Mucosa of descending colon (tissue), 3 donors: ENCODE measurements at regions of chr11 and their contacts with region 1.

Region 1: GRCh38 chr11:7986768-7987559 is at the start of gene EIF3F:
- DNase-seq: peak; percentile 86 to 99 (median 88)
- ATAC-seq: peak; percentile 99
- H3K4me3 ChIP-seq: peak within 1 kb of the TSS; percentile 94
- H3K4me1 ChIP-seq: peaks cover 27% of the 10 kb centered on the region
- CTCF ChIP-seq: peak; percentile 77
- total RNA-seq, gene EIF3F: 207 to 228 (median 218) TPM

Region 2: GRCh38 chr11:7892840-7893254 is 94.1 kb before region 1 on chr11:
- intact Hi-C with region 1: loop called (anchors 5 to 10 kb)
- DNase-seq: peak in 1 of 3 donors; percentile 21
- ATAC-seq: peak; percentile 83
- H3K4me3 ChIP-seq: no peak overlapping the region
- H3K4me1 ChIP-seq: peaks cover 14% of the 10 kb centered on the region
- CTCF ChIP-seq: peak; percentile 50

Region 3: GRCh38 chr11:8219257-8220021 is 232.5 kb after region 1 on chr11:
- intact Hi-C with region 1: no loop called
- DNase-seq: peak in 2 of 3 donors; percentile 63 to 76
- ATAC-seq: peak; percentile 59
- H3K4me3 ChIP-seq: no peak overlapping the region
- H3K4me1 ChIP-seq: peaks cover 3% of the 10 kb centered on the region
- CTCF ChIP-seq: peak; percentile 57

Region 4: DNA sequence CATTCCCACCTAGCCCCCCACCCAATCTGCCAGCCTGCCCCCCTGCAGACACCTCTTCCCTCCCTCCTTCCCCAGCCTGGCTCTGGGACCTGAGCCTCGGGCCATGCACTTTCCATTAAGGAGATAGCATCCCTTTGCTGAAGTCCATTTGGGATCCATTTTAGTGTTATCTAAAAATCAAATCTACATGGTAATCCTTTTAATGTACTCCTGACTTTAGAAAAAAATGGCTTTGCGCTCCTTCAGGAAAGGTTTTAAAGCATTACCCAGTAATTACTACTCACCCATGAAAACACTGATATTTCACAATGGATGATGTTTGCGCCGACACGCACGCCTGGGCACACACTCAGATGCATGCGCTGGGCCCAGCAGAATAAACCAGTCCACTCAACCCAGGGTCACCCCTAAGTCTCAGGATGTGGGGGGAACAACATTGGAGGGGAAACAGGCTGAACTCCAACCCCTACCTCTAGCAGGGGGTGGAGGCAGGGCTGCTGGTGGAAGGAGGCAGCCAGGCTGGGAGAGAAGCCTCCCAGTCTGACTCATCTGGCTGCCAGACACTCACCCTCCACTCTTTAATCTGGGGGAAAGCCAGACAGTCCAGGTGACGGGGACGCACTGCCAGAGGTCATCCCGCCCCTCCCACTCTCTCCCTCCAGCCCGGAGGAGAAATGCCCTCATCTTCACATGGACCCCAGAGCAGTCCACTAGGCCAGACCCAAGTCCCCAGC is 246.9 kb after region 1 on chr11:
- intact Hi-C with region 1: no loop called
- DNase-seq: no peak
- ATAC-seq: no peak
- H3K4me3 ChIP-seq: no peak overlapping the region
- H3K4me1 ChIP-seq: no peaks in the 10 kb centered on the region
- CTCF ChIP-seq: no peak